Dendritic cell treated with granulocyte-macrophage colony-stimulating factor and Interleukin-4, amounts not matched to agents 40 ng/mL and 50 ng/mL, for 4 days (primary cell): ENCODE measurements at regions of chr1 and their contacts with region 1.

Region 1: DNA sequence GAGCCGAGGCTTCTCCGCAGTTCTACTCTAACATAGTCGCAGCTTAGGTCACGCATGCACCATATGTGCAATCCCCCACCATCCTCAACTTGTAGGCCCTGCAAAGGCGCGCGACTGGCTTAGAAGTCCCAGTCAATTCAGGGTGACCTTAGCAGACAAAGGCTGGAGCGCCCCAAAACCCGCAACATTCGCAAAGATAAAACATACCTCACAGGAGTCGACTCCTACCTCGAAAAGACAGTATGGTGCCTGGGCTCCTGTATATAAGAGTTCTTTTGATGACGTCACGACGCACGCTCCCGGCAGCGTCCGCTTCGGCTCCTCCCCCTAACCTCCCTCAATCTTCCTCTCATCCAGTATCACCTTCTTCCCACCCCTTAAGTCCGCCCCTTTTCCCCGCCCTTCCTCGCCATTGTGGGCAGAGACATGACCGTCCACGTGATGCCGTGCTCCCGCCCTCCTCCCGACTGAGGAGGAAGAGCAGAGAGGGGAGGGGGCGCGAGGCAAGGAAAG is at the start of gene GAS5:
- H3K4me3 Mint-ChIP-seq: peak within 1 kb of the TSS; percentile 98
- H3K27ac Mint-ChIP-seq: peak within 1 kb of the TSS; percentile 91
- H3K4me1 Mint-ChIP-seq: peaks cover 50% of the 10 kb centered on the region
- H3K27me3 Mint-ChIP-seq: no peaks in the 10 kb centered on the region

Region 2: DNA sequence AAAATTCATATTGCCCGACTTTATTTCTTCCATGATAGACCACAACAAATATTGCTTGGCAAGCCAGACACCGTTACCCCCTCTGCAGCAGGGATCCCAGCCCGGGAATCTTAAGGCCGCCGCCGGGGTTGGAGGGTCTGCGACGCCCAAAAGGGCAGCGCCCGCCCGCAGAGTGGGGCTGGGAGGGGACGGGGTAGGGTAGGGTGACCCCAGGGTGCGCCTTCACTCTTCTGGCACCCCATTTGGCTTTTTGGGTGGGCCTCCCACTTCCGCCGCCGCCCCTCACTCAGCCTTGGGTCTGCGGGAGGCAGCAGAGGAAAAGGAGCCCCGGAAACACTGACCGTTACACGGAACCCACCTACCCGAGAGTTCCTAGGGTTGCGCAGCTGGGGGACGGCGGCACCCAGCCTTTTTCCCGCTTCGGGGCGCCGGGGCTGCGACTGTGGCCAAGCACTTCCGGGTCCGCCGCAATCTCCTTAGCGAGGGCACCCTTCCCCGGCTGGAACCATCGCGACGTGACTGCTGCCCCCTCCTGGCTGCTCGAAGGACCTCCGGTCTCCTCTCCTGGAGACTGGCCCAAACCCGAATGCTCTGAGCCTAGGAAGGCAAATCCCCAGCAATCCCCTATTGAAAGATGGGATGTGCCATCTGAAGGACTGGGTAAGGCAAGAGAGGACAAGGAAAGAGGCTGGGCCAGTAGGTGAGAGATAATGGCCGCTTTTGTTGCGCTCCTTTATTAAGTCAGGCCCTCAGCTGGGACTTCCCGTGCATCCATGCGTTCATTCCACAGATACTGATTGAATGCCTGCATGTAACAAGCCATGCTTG is 1424.0 kb before region 1 on chr1 and contains the start of gene PIGC:
- intact Hi-C with region 1: loop called (anchors 5 kb)
- H3K4me3 Mint-ChIP-seq: peak within 1 kb of the TSS; percentile 87
- H3K27ac Mint-ChIP-seq: peak within 1 kb of the TSS; percentile 95
- H3K4me1 Mint-ChIP-seq: peaks cover 40% of the 10 kb centered on the region
- H3K27me3 Mint-ChIP-seq: no peaks in the 10 kb centered on the region

Region 3: DNA sequence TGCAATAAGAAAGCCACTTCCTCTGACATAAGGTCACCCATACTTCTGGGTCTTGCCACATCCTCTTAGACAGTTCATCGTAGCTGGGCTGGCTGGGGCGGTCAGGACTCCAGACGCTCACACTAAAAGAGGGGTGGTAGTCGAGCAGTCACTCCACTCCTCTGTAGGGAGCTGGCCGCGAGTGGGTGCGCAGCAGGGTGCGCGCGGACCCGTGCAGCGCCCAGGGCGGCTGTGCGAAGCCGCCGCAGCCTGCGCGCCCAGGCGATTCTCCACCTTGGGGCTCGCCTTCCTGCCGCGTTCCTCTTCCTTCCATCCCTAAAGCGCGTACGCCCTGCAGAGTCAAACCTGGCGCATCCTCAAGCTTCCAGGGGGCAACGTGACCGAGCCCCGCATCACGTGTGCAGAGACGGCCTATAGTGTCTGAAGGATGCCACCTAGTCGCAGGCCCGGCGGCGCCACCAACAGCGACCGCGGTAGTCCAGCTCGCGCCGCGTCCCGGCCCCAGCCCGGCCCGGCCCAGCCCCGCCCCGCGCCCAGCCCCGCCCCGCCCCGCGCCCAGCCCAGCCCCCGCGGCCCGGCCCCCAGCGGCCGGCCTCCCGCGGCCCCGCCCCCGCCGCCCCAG is 391.0 kb before region 1 on chr1:
- intact Hi-C with region 1: loop called (anchors 2 kb)
- H3K4me3 Mint-ChIP-seq: peak overlapping the region; percentile 87
- H3K27ac Mint-ChIP-seq: peak overlapping the region; percentile 96
- H3K4me1 Mint-ChIP-seq: peaks cover 53% of the 10 kb centered on the region
- H3K27me3 Mint-ChIP-seq: no peaks in the 10 kb centered on the region

Region 4: DNA sequence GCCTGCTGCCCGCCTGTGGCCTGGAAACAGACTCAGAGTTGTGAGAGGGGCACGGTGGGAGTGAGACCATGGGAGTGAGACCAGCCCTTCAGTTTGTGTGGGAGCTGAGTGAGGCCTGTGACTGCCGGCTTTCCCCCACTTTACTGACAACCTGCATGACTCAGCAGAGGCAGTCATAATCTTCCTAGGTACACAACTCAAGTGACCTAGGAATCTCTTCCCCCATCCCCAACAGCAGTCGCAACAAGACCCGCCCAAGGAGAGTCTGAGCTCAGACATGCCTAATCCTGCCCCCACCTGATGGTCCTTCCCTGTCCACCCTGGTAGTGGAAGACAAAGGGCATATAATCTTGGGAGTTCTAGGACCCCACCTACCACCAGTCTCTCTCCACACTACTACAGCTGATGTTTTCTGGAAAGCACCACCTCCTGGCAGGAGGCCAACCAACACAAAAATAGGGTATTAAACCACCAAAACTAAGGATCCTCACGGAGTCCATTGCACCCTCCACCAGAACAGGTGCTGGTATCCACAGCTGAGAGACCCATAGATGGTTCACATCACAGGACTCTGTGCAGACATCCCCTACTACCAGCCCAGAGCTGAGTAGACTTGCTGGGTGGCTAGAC is 108.7 kb before region 1 on chr1:
- intact Hi-C with region 1: no loop called
- H3K4me3 Mint-ChIP-seq: no peak overlapping the region
- H3K27ac Mint-ChIP-seq: no peak overlapping the region
- H3K4me1 Mint-ChIP-seq: no peaks in the 10 kb centered on the region
- H3K27me3 Mint-ChIP-seq: no peaks in the 10 kb centered on the region

Region 5: DNA sequence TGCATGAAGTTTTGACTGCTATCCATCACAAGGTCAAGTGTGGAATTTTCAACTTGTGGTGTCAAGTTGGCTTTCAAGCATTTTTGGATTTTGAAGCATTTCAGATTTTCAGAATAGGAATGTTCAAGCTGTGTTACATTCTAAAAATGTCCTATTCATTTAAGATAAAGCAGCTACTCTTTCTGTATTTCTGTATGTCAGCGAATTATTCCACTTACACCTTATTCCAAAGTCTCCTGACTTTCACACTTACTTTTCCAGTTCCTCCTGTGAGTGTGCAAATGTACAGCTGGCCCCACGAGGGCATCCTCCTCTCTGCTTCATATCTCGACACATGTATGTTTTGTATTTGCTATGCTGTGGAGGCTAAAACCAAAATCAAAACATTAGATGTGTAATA is 102.4 kb after region 1 on chr1:
- intact Hi-C with region 1: no loop called
- H3K4me3 Mint-ChIP-seq: no peak overlapping the region
- H3K27ac Mint-ChIP-seq: no peak overlapping the region
- H3K4me1 Mint-ChIP-seq: no peaks in the 10 kb centered on the region
- H3K27me3 Mint-ChIP-seq: no peaks in the 10 kb centered on the region

Region 6: DNA sequence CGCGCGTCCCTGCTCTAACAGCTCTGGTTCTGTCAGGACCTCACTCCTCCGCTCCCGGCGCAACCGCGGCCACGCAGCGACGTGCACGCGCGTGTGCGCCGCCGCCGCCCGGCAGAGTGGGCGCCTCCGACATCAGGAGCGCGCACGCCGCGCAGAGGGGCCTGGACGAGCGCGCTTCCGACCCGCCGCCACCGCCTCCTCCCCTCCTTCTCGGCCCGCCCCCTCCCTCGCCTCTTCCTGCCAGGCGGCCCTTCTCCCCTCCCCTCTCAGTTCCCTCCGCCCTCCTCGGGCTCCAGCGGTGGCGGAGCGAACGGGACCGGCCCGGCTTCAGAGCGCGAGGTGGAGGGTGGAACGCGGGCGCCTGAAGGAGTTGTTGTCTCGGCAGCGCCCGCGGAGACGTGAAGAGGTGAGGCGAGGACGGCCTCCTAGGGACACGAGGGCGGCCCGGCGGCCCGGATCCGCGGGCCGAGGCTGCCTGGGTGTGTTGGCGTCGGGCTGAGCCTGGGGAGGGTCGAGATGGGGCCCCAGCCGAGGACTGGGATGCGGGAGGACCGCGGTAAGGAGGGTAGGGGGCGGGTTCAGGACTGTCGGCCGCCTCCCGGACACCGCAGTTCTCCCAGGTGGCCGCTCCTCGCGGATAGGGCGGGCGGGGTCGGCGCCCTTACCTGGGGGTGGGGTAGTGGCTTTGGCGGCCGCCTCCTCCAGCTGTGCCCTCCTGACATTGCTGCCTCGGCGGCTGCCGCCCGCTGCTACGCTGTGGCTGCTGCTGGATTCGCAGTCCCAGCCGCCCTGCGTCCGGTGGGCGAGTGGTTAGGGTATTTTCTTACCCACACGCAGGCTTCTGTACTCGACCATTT is 291.7 kb after region 1 on chr1 and contains the start of gene RABGAP1L:
- intact Hi-C with region 1: loop called (anchors 2 kb)
- H3K4me3 Mint-ChIP-seq: peak within 1 kb of the TSS; percentile 96
- H3K27ac Mint-ChIP-seq: peak within 1 kb of the TSS; percentile 90
- H3K4me1 Mint-ChIP-seq: peaks cover 39% of the 10 kb centered on the region
- H3K27me3 Mint-ChIP-seq: no peaks in the 10 kb centered on the region